Activated CD4-positive, alpha-beta T cell treated with anti-CD3 and anti-CD28 coated beads, Interleukin-2, amount 10 ng/mL, durations not matched to agents 24 days and 14 days (primary cell): ENCODE measurements at regions of chr2 and their contacts with region 1.

Region 1: DNA sequence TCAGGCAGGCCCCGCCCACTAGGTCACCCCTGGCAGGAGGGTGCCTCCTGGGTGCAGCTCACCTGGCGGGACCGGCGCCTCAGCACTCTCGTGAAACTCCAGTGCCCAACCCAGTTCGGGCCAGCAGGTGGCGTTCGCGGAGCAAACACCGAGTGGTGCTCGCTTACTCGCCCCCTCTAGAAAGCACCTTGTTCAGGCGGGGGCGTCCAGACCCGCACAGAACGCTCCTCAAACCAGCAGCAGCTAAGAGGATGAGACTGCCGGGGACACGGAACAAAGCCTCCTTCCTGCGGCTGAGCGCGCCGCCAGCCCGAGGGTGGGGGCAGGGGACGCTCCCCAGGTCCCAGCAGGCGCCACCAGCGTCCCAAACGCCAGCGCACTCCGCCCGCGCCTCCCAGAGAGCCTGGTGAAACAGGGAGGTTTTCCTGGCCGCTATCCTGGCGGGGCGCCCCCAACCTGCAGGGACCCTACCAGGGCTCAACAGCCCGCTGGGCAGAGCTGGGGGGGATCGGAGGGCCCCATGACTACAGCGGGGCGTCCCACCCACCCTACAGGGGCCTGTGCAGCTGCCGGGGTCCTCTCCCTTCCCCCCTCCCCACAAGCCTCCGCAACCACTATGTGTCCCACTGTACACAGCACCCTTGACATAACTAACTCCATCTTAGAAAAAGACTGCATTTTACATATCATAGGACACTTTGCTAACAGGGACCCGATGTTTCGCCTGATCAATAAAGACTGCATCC is 44.7 kb downstream of the MRPS5 start:
- DNase-seq: peak; percentile 98
- H3K4me3 Mint-ChIP-seq: peak overlapping the region; percentile 95
- H3K27ac Mint-ChIP-seq: peak overlapping the region; percentile 99
- H3K4me1 Mint-ChIP-seq: peaks cover 69% of the 10 kb centered on the region
- H3K27me3 Mint-ChIP-seq: no peaks in the 10 kb centered on the region

Region 2: DNA sequence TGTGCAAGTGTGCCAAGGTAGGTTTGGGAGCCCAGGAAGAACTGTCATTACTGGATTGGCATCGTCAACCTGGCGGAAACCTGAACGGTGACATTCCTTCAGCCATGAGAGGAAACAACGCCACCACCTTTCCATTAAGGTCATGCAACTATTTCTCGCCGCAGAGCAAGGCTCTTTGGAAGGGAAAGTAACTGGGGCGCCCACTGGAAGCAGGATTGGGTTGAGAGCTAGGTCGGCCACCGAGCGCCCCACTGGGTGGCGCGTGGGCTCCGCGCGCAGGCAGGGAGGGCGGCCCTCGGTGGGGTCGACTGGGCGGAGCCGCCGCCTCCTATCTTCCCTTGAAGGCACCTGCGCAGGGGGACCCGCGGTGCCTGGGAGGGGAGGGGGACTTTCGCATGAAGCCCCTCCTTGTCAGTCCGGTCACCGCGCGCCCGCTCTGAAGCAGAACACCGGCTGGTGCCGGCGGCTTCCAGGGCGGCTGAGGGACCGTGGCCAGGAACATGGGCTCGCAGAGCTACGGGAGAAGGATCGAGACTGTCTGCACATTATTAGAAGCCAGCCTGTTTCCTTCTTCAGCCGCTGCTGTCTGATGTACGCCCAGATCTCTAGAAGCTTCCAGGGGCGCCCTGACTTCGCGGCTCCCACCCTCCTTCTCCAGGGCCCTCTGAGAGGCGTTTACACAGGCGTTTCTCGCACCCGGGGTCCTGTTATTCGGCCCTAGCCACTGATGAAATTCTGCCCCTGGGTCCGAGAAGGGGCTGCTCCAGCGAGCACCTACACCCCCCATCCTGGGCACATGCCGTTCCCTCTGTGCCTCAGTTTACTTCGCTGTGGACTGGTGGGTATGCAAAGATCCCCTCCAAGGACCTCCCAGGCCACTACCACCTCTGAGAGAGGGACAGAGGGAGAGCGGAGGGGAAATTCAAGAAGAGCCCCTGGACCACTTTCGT is 78.7 kb before region 1 on chr2:
- intact Hi-C with region 1: no loop called
- DNase-seq: no peak
- H3K4me3 Mint-ChIP-seq: no peak overlapping the region
- H3K27ac Mint-ChIP-seq: no peak overlapping the region
- H3K4me1 Mint-ChIP-seq: no peaks in the 10 kb centered on the region
- H3K27me3 Mint-ChIP-seq: peaks cover 31% of the 10 kb centered on the region

Region 3: DNA sequence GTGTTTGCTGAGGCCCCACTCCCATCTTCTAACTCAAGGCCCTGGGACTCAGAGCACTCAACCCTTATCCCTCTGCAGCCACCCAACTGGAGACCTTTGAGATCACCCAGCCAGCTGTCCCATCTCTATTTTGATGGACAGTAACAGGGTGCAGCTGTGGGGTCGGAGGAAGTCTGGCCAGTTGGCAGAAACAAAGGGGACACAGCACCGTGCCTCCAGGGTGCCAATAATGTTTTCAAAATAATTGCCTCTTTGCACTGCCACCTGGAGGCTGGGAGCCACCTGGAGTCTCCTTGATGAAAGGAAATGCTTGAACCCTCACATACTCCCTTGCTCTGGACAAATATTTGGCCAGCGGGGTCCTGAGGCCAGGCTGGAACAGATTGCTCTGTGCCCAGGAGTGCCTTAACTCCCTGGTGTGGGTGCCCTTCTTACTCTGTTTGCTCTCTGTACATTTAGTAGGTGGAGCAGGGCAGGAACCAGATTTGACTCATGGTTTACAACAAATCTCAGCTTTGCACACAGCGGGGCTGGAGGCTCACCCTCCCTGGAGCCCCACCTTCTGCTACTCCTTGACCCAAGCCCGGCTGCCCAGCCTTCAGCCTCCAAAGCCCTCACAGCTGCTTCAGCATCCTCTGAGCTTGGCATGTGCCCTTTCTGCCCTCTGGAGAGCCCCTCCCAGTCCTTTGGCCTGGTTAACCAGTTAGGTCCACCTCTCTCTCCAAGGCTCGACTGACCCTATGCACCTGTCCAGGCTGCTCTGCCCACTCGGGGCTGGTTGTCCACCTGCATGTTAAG is 34.3 kb before region 1 on chr2:
- intact Hi-C with region 1: loop called (anchors 1 kb)
- DNase-seq: no peak
- H3K4me3 Mint-ChIP-seq: peak overlapping the region; percentile 22
- H3K27ac Mint-ChIP-seq: peak overlapping the region; percentile 78
- H3K4me1 Mint-ChIP-seq: peaks cover 74% of the 10 kb centered on the region
- H3K27me3 Mint-ChIP-seq: no peaks in the 10 kb centered on the region

Region 4: DNA sequence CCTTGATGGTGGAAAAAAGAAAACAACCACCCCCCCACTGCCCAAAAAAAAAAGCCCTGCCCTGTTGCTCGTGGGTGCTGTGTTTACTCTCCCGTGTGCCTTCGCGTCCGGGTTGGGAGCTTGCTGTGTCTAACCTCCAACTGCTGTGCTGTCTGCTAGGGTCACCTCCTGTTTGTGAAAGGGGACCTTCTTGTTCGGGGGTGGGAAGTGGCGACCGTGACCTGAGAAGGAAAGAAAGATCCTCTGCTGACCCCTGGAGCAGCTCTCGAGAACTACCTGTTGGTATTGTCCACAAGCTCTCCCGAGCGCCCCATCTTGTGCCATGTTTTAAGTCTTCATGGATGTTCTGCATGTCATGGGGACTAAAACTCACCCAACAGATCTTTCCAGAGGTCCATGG is 23.4 kb before region 1 on chr2:
- intact Hi-C with region 1: loop called (anchors 2 kb)
- DNase-seq: no peak
- H3K4me3 Mint-ChIP-seq: peak overlapping the region; percentile 11
- H3K27ac Mint-ChIP-seq: peak overlapping the region; percentile 79
- H3K4me1 Mint-ChIP-seq: peaks cover 75% of the 10 kb centered on the region
- H3K27me3 Mint-ChIP-seq: no peaks in the 10 kb centered on the region

Region 5: GRCh38 chr2:95104606-95105005 is 27.6 kb after region 1 on chr2:
- intact Hi-C with region 1: no loop called
- DNase-seq: no peak
- H3K4me3 Mint-ChIP-seq: no peak overlapping the region
- H3K27ac Mint-ChIP-seq: no peak overlapping the region
- H3K4me1 Mint-ChIP-seq: no peaks in the 10 kb centered on the region
- H3K27me3 Mint-ChIP-seq: no peaks in the 10 kb centered on the region

Region 6: DNA sequence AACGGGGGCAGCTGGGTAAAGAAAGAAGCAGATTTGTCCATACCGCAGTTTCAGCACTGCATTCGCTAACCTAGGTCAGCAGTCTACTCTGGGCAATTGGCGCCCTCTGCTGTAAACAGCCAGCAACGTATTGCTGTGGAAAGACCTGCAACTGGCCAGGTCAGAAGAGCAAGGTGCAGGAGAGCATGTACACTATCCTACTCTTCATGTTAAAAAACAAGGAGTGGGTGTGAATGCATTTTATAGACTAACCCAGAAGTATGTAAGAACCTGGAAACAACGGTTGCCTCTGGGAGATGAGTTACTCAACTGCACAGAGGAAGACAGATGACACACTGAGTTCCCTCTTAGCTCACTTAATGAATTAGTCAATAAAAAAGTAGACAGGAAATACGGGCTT is 38.5 kb after region 1 on chr2:
- intact Hi-C with region 1: loop called (anchors 1 kb)
- DNase-seq: peak; percentile 93
- H3K4me3 Mint-ChIP-seq: no peak overlapping the region
- H3K27ac Mint-ChIP-seq: no peak overlapping the region
- H3K4me1 Mint-ChIP-seq: peaks cover 40% of the 10 kb centered on the region
- H3K27me3 Mint-ChIP-seq: no peaks in the 10 kb centered on the region

Region 7: DNA sequence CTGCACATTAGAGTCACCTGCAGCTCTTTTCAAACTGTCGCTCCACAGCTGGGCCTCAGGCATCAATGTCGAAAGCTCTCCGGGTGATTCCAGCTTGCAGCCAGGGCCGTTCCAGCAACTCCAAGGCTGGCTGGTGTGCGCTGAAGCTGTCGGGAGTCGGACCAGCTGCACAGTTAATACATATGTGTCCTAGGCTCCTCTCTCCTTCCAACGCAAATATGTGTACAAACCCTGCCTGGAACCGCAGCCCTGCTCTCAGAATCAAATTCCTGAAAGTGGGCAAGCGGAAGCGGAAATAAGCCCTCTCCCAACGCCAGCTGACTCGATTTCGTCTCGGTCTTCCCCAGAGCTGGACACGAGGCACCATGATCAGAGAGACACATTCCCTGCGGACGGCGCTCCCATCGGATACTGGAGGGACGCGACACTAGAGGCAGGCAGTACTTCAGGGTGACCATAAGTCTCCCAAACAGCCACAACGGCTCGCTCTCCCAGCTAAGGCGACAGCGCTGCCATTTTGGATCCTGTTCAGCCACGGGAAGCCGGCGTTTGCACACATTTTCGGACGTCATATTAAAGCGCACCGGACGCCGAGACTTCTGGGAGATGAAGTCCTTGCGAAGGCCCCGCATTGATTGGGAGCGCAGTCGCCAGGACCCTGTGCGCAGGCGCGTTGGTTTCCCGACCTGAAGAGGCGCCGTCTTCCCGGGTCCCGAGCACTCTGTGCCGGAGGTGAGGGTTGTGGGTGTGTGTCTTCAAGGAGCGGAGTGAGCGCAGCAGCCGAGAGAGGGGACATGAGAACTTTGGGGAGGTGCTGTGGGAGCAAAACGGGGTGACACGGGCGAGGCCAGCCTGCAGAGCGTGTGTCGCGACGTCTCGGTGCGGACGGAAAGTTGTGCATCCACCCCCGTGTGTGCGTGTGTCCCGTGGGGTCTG is 88.4 kb after region 1 on chr2 and contains the start of gene ZNF2:
- intact Hi-C with region 1: loop called (anchors 2 kb)
- DNase-seq: peak; percentile 99
- H3K4me3 Mint-ChIP-seq: peak within 1 kb of the TSS; percentile 98
- H3K27ac Mint-ChIP-seq: peak within 1 kb of the TSS; percentile 97
- H3K4me1 Mint-ChIP-seq: peaks cover 26% of the 10 kb centered on the region
- H3K27me3 Mint-ChIP-seq: no peaks in the 10 kb centered on the region
- total RNA-seq, gene ZNF2: 4.4 and 5.4 TPM in 2 replicates